ENCODE measurements at regions of chr11 and their contacts with region 1.

Region 1: DNA sequence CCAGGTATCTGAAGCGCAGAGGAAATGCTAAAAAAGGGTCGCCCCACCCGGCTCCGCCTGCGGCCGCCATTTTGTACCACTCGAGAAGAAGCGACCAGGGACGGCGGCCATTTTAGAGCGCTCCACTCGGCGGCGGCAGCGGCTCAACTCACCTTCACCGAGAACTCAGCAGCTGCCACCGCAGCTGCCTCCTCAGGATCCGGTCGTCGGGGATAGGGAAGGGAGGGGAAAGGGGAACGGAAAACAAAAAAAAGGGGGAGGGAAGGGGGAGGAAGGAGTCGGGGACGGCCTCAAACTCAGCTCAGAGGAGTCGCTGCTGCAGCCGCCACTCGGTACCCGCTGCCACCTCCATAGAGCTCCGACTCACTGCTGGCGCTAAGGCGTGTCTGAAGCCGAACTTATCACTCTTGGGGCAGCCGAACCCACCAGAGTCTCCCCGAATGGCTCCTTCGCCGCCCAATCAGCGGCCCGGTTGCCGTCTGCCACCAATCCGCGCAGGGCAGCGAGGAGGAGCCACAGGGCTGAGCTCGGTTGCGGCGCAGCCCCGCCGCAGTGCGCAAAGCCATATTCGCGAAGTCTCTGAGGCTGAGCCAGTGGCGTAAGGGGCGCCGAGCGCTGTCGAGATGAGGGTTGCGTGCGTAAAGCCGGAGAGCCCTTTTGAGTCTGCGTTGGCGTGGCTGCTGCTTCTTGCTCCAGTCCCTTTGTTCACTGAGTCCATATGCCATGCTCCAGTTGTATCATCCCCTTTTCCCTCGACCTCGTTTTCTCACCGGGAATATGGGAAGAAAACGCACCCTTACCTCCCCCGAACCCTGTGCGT is at the start of gene EIF4G2:
- DNase-seq: peak; percentile 95
- ATAC-seq: peak; percentile 96
- H3K4me3 ChIP-seq: peak within 1 kb of the TSS; percentile 88
- H3K27ac ChIP-seq: peak within 1 kb of the TSS; percentile 98
- H3K4me1 ChIP-seq: peaks cover 10% of the 10 kb centered on the region; the same call in 1 of the 2 replicates
- H3K27me3 ChIP-seq: no peaks in the 10 kb centered on the region
- CTCF ChIP-seq: no peak
- EP300 ChIP-seq: no peak
- POLR2A ChIP-seq: peak; percentile 98
- RAD21 ChIP-seq: no peak
- polyA plus RNA-seq, gene EIF4G2: 210 to 317 TPM

Region 2: DNA sequence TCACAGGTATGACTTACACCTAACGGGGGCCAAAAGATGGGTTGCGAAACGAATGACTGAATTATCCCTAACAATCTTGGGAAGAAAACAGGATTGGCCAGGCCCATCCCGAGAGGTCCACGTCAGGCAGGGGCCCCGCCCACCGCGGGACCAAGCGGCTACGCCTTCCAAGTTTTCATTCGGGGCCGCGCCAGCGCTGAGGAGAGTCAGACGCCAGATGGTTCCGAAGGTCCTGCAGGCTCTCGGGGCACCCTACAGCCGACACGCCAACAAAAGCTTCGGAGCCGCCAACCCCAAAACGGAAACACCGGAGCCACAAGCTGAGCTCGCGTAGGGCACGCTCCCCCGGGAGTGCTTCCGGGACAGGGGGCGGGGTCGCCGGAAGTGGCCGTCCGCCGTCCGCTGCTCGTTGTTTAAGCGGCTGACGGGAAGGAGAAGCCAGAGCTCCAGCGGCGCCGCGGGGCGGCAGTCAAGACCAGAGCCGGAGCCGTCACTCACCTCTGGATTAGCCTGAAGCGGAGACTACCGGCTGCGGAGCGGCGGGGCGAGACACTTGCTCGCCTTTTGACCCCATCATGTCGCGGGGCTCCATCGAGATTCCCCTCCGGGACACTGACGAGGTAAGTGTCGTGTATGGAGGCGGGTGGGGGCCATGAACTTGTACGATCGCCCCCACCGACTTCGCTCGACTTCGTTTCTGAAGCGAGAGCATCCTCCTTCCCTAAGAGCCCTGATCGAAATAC is 57.8 kb before region 1 on chr11 and contains the start of gene CTR9:
- CTCF ChIA-PET with region 1: interaction called, 3 read pairs
- POLR2A ChIA-PET with region 1: interaction called, 8 read pairs
- RAD21 ChIA-PET with region 1: interaction called, 7 read pairs
- SMC1A ChIA-PET with region 1: interaction called, 5 read pairs
- in situ Hi-C with region 1: no loop called
- intact Hi-C with region 1: loop called (anchors 5 kb)
- DNase-seq: peak; percentile 68
- ATAC-seq: peak; percentile 96
- H3K4me3 ChIP-seq: peak within 1 kb of the TSS; percentile 92
- H3K27ac ChIP-seq: peak within 1 kb of the TSS; percentile 93
- H3K4me1 ChIP-seq: peaks cover 3% of the 10 kb centered on the region; the same call in 1 of the 2 replicates
- H3K27me3 ChIP-seq: no peaks in the 10 kb centered on the region
- CTCF ChIP-seq: peak; percentile 20 to 59 (median 44); a peak in 4 of 6 replicates
- EP300 ChIP-seq: no peak
- POLR2A ChIP-seq: peak; percentile 99
- RAD21 ChIP-seq: peak; percentile 43; the same call in 1 of the 2 replicates
- polyA plus RNA-seq, gene CTR9: 13.9 to 24.3 TPM

Region 3: DNA sequence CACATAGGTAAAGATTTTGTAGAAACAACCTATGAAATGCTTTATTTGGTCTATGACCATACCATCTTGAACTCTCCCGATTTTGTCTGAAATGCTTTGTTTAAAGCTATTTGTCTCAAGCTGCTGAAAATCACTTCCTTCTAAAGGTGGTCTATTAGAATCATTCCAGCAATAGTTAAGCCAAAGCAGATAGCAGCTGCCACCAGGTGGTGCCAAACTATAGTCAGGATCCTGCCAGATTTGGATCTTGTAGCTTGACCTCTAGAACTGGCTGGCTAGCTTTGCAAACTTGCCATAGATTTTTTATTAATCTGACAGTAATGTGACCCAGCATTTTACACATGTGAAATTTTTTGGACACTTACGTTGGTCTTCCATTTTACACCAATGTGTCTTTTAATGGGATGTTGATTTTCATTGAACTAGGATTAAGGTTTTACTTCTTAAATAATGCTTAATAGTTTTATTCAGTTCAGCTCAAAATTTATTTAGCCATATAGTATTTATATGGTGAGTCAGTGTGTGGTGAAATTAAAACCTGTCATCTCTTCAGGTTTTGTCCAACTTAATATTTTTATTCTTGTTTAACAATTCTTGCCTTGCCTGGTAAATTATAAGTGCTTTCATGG is 38.0 kb before region 1 on chr11:
- CTCF ChIA-PET with region 1: interaction called, 24 read pairs
- POLR2A ChIA-PET with region 1: no interaction called
- RAD21 ChIA-PET with region 1: interaction called, 3 read pairs
- SMC1A ChIA-PET with region 1: interaction called, 3 read pairs
- in situ Hi-C with region 1: no loop called
- intact Hi-C with region 1: no loop called
- DNase-seq: no peak
- ATAC-seq: peak; percentile 84
- H3K4me3 ChIP-seq: no peak overlapping the region
- H3K27ac ChIP-seq: no peak overlapping the region
- H3K4me1 ChIP-seq: no peaks in the 10 kb centered on the region
- H3K27me3 ChIP-seq: no peaks in the 10 kb centered on the region
- CTCF ChIP-seq: peak; percentile 62 to 79 (median 69)
- EP300 ChIP-seq: no peak
- POLR2A ChIP-seq: no peak
- RAD21 ChIP-seq: peak; percentile 29

Region 4: DNA sequence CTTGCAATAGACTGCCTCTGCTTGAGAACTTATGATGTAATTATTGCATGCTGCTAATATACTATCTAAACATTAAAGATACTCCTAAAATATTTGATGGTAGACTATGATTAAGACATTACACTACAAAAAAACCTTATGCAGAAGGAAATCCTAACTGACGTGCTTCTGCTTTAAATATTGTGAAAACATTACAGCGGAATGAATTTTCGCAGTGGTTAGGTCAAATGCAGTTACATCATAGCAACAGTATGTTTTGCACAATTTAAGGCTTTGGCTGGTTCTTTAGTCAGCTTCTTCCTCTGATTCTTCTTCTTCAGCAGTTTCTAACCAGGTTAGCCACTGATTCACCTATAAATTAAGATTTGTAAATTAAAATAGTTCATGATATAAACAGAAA is 11.2 kb before region 1 on chr11:
- CTCF ChIA-PET with region 1: interaction called, 61 read pairs
- POLR2A ChIA-PET with region 1: interaction called, 13 read pairs
- RAD21 ChIA-PET with region 1: interaction called, 20 read pairs
- SMC1A ChIA-PET with region 1: interaction called, 14 read pairs
- in situ Hi-C with region 1: no loop called
- intact Hi-C with region 1: no loop called
- DNase-seq: no peak
- ATAC-seq: no peak
- H3K4me3 ChIP-seq: no peak overlapping the region
- H3K27ac ChIP-seq: no peak overlapping the region
- H3K4me1 ChIP-seq: no peaks in the 10 kb centered on the region; the same call in 1 of the 2 replicates
- H3K27me3 ChIP-seq: no peaks in the 10 kb centered on the region
- CTCF ChIP-seq: no peak
- EP300 ChIP-seq: no peak
- POLR2A ChIP-seq: no peak
- RAD21 ChIP-seq: no peak

Region 5: DNA sequence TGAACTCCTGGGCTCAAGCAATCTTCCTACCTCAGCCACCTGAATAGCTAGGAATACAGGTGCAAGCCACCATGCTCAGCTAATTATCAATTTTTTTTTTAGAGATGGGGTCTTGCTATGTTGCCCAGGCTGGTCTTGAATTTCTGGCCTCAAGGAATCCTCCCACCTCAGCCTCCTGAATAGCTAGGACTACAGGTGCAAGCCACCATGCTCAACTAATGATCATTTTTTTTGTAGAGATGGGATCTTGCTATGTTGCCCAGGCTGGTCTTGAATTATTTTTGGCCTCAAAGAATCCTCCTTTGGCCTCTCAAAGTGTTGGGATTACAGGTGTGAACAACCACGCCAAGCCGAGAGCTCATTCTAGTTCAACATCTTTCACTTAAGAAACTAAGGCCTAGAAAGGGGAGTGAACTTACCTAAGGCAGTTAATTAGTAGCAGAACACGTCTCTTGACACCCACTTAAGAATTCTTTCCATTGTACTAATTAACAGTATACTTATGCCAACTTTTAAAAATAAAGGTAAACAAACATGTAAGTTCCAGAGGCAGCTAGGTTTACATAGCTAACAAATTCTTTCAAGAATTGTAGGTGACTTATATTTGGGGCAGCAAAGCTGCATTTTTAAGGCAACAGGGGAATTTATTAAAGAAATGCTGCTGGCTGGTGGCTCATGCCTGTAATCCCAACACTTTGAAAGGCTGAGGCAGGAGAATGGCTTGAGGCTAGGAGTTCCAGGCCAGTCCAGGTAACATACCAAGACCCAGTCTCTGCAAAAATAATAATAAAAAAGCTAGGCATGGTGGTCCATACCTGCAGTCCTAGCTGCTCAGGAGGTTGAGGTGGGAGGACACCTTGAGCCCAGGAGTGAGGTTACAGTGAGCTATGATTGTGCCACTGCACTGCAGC is 39.5 kb after region 1 on chr11:
- CTCF ChIA-PET with region 1: interaction called, 4 read pairs
- POLR2A ChIA-PET with region 1: interaction called, 11 read pairs
- RAD21 ChIA-PET with region 1: no interaction called
- SMC1A ChIA-PET with region 1: interaction called, 4 read pairs
- in situ Hi-C with region 1: no loop called
- intact Hi-C with region 1: no loop called
- DNase-seq: no peak
- ATAC-seq: no peak
- H3K4me3 ChIP-seq: no peak overlapping the region
- H3K27ac ChIP-seq: no peak overlapping the region
- H3K4me1 ChIP-seq: no peaks in the 10 kb centered on the region
- H3K27me3 ChIP-seq: no peaks in the 10 kb centered on the region
- CTCF ChIP-seq: no peak
- EP300 ChIP-seq: no peak
- POLR2A ChIP-seq: no peak
- RAD21 ChIP-seq: no peak

Region 6: DNA sequence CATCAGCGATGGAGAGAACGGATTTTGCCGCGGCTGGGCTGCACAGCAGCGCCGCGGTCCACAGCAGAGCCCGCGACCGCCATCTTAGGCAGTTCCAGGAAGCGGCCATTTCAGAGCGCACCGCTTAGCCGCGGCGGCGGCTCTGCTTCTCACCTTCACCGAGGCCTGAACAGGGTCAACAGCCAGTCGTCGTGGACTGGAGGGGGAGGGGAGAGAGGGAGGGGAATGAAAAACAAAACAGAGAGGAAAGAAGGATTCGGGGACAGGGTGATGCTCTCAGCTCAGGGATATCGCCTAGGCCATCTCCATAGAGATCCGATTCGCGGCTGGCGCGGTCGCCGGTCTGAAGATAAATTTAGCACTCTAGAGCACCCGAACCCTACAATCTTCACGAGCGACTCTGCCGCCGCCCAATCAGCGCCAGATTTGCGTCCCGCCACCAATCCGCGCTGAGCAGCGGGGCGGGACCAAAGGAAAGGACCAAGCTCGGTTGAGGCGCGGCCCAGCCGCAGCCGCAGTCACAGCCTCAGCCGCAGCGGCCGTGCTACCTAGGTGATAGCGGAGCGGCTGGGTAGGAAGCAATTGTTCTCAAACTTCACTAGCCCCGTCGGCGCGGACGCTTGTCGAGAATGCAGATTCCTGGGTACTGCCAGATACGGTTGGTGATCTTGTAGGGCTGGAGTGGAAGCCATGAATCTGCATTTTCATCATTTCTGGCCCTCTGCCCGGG is 49.1 kb after region 1 on chr11 and contains the start of gene ZBED5:
- CTCF ChIA-PET with region 1: interaction called, 15 read pairs
- POLR2A ChIA-PET with region 1: interaction called, 87 read pairs
- RAD21 ChIA-PET with region 1: interaction called, 32 read pairs
- SMC1A ChIA-PET with region 1: interaction called, 31 read pairs
- in situ Hi-C with region 1: no loop called
- intact Hi-C with region 1: loop called (anchors 1 kb)
- DNase-seq: peak; percentile 90
- ATAC-seq: peak; percentile 95
- H3K4me3 ChIP-seq: peak within 1 kb of the TSS; percentile 92
- H3K27ac ChIP-seq: peak within 1 kb of the TSS; percentile 87
- H3K4me1 ChIP-seq: no peaks in the 10 kb centered on the region
- H3K27me3 ChIP-seq: no peaks in the 10 kb centered on the region
- CTCF ChIP-seq: peak in 2 of 3 experiments; percentile 1 to 4; a peak in 1 of 6 replicates
- EP300 ChIP-seq: peak in 1 of 2 experiments; percentile 53; a peak in 3 of 4 replicates
- POLR2A ChIP-seq: peak; percentile 84
- RAD21 ChIP-seq: no peak
- polyA plus RNA-seq, gene ZBED5: 27.3 to 29.4 TPM

Region 7: DNA sequence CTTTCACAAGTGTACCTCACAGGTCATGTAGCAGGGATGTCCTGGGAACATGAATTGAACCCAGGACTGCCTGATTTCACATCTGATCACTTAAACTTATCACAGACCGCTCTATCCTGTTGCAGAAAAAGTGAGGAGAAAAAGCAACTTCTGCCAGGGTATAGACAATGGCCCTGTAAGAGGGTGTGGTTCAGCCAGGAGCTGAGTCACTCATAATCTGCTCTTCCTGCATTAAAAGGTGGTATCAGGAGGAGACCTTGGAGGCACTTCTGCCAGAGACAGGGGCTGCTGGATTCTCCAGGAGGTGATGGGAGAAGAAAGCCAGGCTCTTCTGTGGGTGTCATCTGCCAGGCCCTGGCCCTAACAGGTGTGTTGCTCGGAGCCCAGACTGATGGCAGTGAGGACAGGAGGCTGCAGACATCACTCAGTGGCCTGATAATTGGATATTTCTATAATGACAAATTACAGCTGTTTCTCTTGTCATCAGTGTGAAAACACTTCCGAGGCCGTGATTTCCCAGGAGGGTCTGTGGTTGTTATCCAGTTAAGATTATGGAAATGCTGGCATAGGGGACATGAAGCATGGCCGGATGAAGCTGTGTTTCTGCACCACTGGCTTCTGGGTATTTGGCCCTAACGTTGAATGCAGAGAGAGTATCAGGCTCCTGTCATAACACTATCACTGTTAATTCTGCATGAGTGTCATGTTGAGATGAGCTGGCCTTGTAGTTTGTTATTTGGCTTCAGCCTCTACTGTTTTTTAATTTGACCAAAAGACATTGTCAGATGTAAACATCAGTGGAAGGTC is 174.1 kb after region 1 on chr11:
- CTCF ChIA-PET with region 1: no interaction called
- POLR2A ChIA-PET with region 1: no interaction called
- RAD21 ChIA-PET with region 1: no interaction called
- SMC1A ChIA-PET with region 1: no interaction called
- in situ Hi-C with region 1: no loop called
- intact Hi-C with region 1: no loop called
- DNase-seq: no peak
- ATAC-seq: no peak
- H3K4me3 ChIP-seq: no peak overlapping the region
- H3K27ac ChIP-seq: no peak overlapping the region
- H3K4me1 ChIP-seq: 0 out of 2 replicates have a peak, but pooled peaks cover 4% of the 10 kb centered on the region
- H3K27me3 ChIP-seq: no peaks in the 10 kb centered on the region
- CTCF ChIP-seq: no peak
- EP300 ChIP-seq: no peak
- POLR2A ChIP-seq: no peak
- RAD21 ChIP-seq: no peak

Region 8: DNA sequence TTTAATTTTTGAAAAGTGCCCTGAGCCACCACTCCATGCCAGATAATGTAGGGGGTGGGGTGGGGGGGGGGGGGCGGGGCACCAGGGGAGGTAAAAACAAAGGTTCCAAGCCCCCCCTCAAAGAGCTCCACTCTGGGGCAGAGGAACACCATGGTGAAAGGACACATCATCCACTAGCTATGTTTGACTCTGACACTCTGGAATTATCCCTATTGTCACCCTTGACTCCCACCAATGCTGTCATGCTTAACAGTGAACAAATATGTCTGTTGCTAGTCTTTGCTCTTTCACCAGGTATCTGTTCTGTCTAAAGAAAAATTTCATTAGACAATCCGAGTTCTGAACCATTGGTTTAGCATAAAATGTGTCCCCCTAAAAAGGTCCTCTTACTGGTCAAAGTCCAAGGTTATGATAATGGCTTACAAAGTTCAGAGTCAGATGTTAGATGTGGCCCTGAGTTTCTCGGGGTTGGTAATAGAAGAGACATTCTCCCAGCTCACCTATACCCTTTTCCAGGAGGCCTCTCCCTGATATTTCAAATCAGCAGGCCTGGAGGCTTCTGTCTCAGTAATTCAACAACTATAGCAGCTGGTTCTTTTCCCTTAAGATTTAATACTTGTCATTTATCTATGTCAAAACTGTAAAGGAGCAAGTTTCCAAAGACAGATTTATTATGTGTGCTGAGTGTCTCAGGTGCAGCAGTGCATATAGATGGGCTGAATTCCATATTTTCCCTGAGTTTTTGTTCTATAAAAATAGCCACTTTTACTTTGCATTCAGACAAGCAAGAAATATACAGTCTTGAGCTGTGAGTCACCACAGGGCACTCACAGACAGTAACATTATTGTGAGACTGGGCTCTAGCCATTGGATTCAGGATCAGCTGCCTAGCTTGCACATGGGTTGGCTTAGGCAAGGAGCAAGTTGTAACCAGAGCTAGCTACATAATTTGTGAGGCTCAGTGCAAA is 370.2 kb after region 1 on chr11:
- CTCF ChIA-PET with region 1: no interaction called
- POLR2A ChIA-PET with region 1: no interaction called
- RAD21 ChIA-PET with region 1: no interaction called
- SMC1A ChIA-PET with region 1: no interaction called
- in situ Hi-C with region 1: no loop called
- intact Hi-C with region 1: no loop called
- DNase-seq: no peak
- ATAC-seq: no peak
- H3K4me3 ChIP-seq: no peak overlapping the region
- H3K27ac ChIP-seq: no peak overlapping the region
- H3K4me1 ChIP-seq: no peaks in the 10 kb centered on the region
- H3K27me3 ChIP-seq: no peaks in the 10 kb centered on the region
- CTCF ChIP-seq: no peak
- EP300 ChIP-seq: no peak
- POLR2A ChIP-seq: no peak
- RAD21 ChIP-seq: no peak

Measured in GM12878 (cell line).